ENCODE measurements at regions of chr13 and their contacts with region 1.

Region 1: DNA sequence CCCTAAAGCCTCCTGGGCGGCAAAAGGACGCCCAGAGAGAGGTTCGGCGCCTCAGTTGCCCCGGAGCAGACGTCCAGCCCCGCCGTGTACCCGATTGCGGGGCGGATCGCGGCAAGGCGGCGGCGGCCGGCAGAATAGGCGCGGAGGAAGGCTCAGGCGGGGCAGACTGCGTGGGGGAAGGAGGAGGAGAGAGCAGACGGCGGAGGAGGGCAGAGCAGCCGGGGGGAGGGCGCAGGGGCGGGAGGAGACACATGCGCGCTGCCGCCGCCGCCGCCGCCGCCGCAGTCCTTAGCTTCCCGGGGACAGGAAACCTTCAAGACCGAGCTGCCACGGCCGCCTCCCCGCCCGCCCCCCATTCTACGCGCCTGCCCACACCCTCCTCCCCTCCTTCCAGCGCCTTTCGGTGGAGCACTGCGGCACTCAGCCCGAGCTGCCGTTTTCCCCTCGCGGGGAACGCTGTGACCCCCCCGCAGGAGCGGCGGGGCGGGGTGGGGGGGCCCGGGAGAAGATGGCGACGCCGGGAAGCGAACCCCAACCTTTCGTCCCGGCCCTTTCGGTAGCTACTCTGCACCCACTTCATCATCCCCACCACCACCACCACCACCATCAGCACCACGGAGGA is at the start of gene LRCH1:
- H3K4me3 ChIP-seq: peak within 1 kb of the TSS; percentile 65
- H3K27ac ChIP-seq: peak within 1 kb of the TSS; percentile 80
- H3K4me1 ChIP-seq: peaks cover 7% of the 10 kb centered on the region; the same call in 1 of the 2 replicates
- CTCF ChIP-seq: no peak

Region 2: GRCh38 chr13:46542833-46543232 is 10.2 kb before region 1 on chr13:
- CTCF ChIA-PET with region 1: interaction called, 14 read pairs
- POLR2A ChIA-PET with region 1: no interaction called
- H3K4me3 ChIP-seq: no peak overlapping the region
- H3K27ac ChIP-seq: no peak overlapping the region
- H3K4me1 ChIP-seq: no peaks in the 10 kb centered on the region
- CTCF ChIP-seq: no peak